ENCODE measurements at regions of chr9 and their contacts with region 1.

Region 1: GRCh38 chr9:129550199-129550839 is 70.6 kb downstream of the C9orf50 start:
- DNase-seq: peak; percentile 35
- H3K4me3 ChIP-seq: peak overlapping the region; percentile 16 to 40 (median 29)
- H3K27ac ChIP-seq: no peak overlapping the region
- H3K4me1 ChIP-seq: peaks cover 3% of the 10 kb centered on the region
- H3K27me3 ChIP-seq: peaks cover 3% of the 10 kb centered on the region in 2 experiments
- CTCF ChIP-seq: no peak
- POLR2A ChIP-seq: no peak

Region 2: GRCh38 chr9:129436751-129437625 is 113.3 kb before region 1 on chr9:
- CTCF ChIA-PET with region 1: no interaction called
- POLR2A ChIA-PET with region 1: no interaction called
- dilution Hi-C with region 1: no loop called
- intact Hi-C with region 1: no loop called
- DNase-seq: peak; percentile 57
- H3K4me3 ChIP-seq: peak overlapping the region in 2 of 3 experiments; percentile 34 to 54
- H3K27ac ChIP-seq: no peak overlapping the region
- H3K4me1 ChIP-seq: no peaks in the 10 kb centered on the region
- H3K27me3 ChIP-seq: peaks cover 24 to 32% of the 10 kb centered on the region in 2 experiments
- CTCF ChIP-seq: no peak
- POLR2A ChIP-seq: no peak

Region 3: DNA sequence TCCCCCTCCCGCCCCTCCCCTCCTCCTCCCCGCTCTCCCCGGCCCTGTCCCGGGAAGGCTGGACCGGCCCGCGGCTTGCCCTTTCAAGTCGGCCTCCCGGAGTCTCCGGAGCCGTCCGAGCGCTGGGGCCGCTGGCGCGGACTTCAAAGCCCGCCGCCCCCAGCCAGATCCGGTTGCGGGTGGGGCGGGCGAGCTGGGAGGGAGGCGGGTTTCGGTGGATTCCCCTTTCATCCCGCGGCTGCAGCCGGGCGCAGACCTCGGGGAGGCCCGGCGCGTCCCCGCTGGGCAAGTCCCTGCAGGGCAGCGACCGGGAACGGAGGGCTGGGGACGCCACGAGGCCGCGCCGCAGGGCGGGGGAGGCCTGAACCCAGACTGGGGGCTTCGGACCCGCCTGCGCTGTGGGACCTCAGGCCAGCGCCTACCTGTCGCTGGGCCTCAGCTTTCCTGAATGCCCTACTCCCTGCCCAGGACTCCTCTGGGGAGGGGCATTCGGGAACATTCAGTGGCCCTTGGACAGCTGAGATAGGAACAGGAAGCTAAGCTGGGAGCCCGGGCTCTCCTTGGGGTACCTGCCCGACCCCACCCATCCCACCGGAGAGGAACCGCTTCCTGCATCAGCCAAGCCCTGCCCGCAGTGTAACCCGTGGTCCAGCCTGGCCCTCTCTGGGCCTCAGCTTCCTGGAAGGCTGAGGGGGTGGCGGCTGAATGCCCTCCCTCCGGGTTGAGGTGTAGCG is 47.2 kb after region 1 on chr9:
- CTCF ChIA-PET with region 1: no interaction called
- POLR2A ChIA-PET with region 1: no interaction called
- dilution Hi-C with region 1: no loop called
- intact Hi-C with region 1: loop called (anchors 5 kb)
- DNase-seq: peak; percentile 34
- H3K4me3 ChIP-seq: peak overlapping the region in 2 of 3 experiments; percentile 33 to 45
- H3K27ac ChIP-seq: peak overlapping the region; percentile 18
- H3K4me1 ChIP-seq: peaks cover 10% of the 10 kb centered on the region
- H3K27me3 ChIP-seq: no peaks in the 10 kb centered on the region
- CTCF ChIP-seq: no peak
- POLR2A ChIP-seq: no peak

Measured in endothelial cell of umbilical vein (primary cell).